CD4-positive, alpha-beta memory T cell (primary cell): ENCODE measurements at regions of chr6 and their contacts with region 1.

Region 1: DNA sequence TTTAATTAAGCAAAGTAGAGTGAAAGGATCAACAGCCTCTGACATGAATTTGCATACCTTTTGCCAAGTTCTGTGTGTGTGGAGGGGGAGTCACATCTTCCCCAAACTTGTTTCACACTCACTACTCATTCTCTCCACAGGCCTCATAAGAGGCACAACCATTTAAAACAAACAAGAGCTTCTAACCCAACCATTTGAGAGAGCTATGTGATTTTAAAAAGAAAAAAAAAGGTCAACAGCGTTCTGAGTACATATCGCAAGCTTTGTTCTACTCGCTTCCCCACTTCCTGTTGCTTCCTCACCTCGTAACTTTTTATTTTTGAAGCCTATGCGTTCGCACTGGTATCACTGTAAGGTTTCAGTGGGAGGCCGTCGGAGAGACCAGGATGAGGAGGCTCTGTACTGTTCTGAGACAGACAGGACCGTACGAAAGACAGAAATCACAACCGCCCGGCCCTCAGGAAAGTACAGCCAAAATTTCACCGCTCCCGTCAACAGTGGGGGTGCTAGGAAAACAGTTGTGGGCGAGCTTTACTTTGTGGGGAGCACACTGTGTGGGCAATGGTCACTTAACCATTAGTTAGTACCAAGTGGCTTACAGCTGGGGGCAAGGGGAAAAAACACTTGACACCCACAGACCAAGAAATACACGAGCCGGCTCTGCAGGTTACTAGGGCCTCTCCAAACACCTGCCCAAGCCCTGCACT is 61.3 kb downstream of the TRERF1 start:
- DNase-seq: peak; percentile 73 to 79 (median 77)
- H3K4me3 ChIP-seq: peak overlapping the region; percentile 1 to 42
- H3K4me3 Mint-ChIP-seq: peak overlapping the region; percentile 73 to 85 (median 82)
- H3K27ac ChIP-seq: peak overlapping the region; percentile 79
- H3K27ac Mint-ChIP-seq: peak overlapping the region; percentile 96 to 99 (median 98)
- H3K4me1 ChIP-seq: peaks cover 100% of the 10 kb centered on the region
- H3K4me1 Mint-ChIP-seq: peaks cover 76 to 100% (median 90%) of the 10 kb centered on the region in 4 donors
- H3K27me3 ChIP-seq: no peaks in the 10 kb centered on the region
- H3K27me3 Mint-ChIP-seq: no peaks in the 10 kb centered on the region

Region 2: GRCh38 chr6:42367353-42368011 is 22.9 kb before region 1 on chr6:
- CTCF ChIA-PET with region 1: interaction called, 13 read pairs
- POLR2A ChIA-PET with region 1: interaction called, 122 read pairs
- intact Hi-C with region 1: loop called (anchors 1 kb)
- DNase-seq: peak in 1 of 5 donors; percentile 29
- H3K4me3 ChIP-seq: peak overlapping the region; percentile 19 to 48
- H3K4me3 Mint-ChIP-seq: peak overlapping the region; percentile 76 to 89 (median 82)
- H3K27ac ChIP-seq: peak overlapping the region; percentile 48
- H3K27ac Mint-ChIP-seq: peak overlapping the region; percentile 90 to 95 (median 94)
- H3K4me1 ChIP-seq: peaks cover 72% of the 10 kb centered on the region
- H3K4me1 Mint-ChIP-seq: peaks cover 55 to 86% (median 70%) of the 10 kb centered on the region in 4 donors
- H3K27me3 ChIP-seq: no peaks in the 10 kb centered on the region
- H3K27me3 Mint-ChIP-seq: no peaks in the 10 kb centered on the region

Region 3: DNA sequence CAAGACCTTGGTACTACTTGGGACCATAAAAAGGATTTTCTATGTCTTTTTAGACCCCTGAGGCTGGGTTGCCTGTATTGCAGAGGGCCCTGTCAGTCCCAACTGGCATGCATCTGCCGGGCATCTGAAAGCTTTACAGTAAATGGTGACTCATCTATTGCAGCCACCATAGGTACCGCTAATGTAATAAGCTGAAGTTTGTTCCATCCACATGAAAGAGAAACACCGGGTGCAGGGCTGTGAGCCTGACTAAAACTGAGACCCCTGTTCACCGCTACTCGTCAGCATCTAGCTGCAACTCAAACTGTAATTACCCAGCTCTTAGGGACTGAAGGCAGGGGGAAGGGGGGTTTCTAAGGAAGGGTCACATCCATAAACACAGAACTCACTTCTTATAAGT is 11.8 kb after region 1 on chr6:
- CTCF ChIA-PET with region 1: interaction called, 25 read pairs
- POLR2A ChIA-PET with region 1: interaction called, 121 read pairs
- intact Hi-C with region 1: loop called (anchors 2 kb)
- DNase-seq: peak in 1 of 5 donors; percentile 65
- H3K4me3 ChIP-seq: no peak overlapping the region
- H3K4me3 Mint-ChIP-seq: peak overlapping the region; percentile 31 to 77 (median 58)
- H3K27ac ChIP-seq: no peak overlapping the region
- H3K27ac Mint-ChIP-seq: peak overlapping the region; percentile 61 to 95 (median 90)
- H3K4me1 ChIP-seq: peaks cover 86% of the 10 kb centered on the region
- H3K4me1 Mint-ChIP-seq: peaks cover 67 to 97% (median 80%) of the 10 kb centered on the region in 4 donors
- H3K27me3 ChIP-seq: no peaks in the 10 kb centered on the region
- H3K27me3 Mint-ChIP-seq: no peaks in the 10 kb centered on the region

Region 4: DNA sequence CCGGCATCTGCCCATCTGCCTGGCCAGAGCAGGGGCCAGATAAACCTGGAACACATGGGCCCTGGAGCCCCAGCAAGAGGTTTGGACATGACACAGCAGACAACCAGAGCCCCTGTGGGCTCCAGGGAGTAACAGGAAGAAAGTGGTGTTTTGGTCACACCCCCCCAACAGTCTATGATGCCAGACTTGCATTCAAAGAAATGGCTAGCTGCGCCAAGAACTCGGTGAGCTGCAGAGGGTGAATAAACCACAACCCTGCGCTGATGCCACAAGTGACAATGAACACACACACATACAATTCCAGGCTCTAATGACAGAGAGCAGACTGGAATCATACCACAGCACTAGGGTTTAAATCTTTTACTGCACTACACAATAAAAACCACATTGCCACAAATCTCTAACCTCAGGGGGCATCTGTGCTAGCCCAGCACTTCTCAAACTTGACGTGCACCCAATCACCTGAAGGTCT is 27.3 kb after region 1 on chr6:
- CTCF ChIA-PET with region 1: interaction called, 17 read pairs
- POLR2A ChIA-PET with region 1: interaction called, 41 read pairs
- intact Hi-C with region 1: no loop called
- DNase-seq: peak; percentile 45 to 79 (median 63)
- H3K4me3 ChIP-seq: no peak overlapping the region
- H3K4me3 Mint-ChIP-seq: peak overlapping the region; percentile 37 to 76 (median 58)
- H3K27ac ChIP-seq: no peak overlapping the region
- H3K27ac Mint-ChIP-seq: peak overlapping the region; percentile 42 to 85 (median 81)
- H3K4me1 ChIP-seq: peaks cover 44% of the 10 kb centered on the region
- H3K4me1 Mint-ChIP-seq: peaks cover 43 to 81% (median 60%) of the 10 kb centered on the region in 4 donors
- H3K27me3 ChIP-seq: no peaks in the 10 kb centered on the region
- H3K27me3 Mint-ChIP-seq: no peaks in the 10 kb centered on the region

Region 5: DNA sequence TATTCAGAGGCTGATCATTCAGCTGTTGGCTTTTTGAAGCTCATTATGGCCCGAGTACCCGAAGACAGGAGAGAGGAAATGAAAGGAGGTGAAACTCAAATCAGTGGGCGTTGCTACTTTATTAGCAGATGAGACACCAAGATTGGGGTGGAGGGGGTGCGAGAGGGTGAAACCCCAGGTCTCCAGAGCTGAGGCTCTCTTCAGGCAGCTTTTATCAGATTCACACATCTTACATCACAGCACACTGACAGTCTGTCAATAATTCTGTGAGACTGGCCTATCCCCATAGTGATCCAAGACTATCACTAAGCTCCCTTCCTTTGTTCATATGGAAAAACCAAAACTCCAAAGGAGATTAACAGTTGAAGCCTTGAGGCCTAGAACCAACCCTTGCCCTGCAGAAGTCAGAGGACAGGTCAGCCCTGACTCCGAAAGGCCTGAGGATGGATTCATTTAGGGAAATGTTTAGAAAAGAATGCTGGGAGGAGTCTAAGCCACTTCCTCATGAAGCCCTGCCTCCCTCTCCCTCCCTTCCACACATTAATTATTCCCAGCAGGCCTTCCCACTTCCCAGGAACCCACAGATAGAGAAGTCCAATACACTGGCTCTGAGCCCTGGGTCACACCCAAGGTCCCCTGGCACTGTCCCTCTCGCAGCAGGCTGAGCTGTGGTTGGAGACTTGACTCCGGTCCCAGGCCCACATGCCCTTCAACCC is 38.1 kb after region 1 on chr6:
- CTCF ChIA-PET with region 1: interaction called, 17 read pairs
- POLR2A ChIA-PET with region 1: interaction called, 51 read pairs
- intact Hi-C with region 1: loop called (anchors 5 kb)
- DNase-seq: peak; percentile 56 to 85 (median 62)
- H3K4me3 ChIP-seq: peak overlapping the region in 1 of 2 donors; percentile 25
- H3K4me3 Mint-ChIP-seq: peak overlapping the region; percentile 44 to 82 (median 66)
- H3K27ac ChIP-seq: peak overlapping the region; percentile 54
- H3K27ac Mint-ChIP-seq: peak overlapping the region; percentile 72 to 98 (median 93)
- H3K4me1 ChIP-seq: peaks cover 78% of the 10 kb centered on the region
- H3K4me1 Mint-ChIP-seq: peaks cover 54 to 77% (median 62%) of the 10 kb centered on the region in 4 donors
- H3K27me3 ChIP-seq: no peaks in the 10 kb centered on the region
- H3K27me3 Mint-ChIP-seq: no peaks in the 10 kb centered on the region